ENCODE measurements at regions of chr10 and their contacts with region 1.

Region 1: DNA sequence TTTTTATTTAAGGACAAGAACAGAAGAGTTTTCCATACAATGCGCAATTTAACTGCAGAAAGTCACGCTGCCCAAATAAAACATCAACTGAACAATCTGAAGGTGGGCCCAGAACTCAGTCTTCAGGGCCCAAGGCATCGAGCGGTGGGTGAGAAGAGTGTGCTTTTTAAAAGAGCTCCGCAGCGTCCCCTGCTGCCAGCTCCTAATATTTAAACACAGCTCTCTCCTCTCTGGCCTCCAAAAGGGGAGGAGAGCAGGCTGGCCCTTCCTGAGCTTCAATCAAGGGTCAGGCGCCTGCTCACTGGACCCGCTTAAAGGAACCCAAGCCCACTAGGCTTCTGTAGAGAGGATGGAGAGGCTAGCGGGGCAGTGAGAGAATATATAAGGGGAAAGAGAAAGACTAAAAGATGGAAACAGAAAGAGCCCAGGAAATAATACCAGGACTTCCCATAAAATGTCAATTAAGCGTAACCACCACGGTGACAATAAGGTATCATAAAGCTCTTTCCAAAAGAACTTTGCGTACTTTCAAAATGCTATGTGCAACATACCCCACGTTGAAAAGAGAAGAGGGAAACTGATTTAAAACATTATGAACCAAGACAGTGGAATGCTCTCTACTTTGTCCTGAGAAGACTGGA is 2.8 kb downstream of the FAM53B start:
- DNase-seq: peak; percentile 64 to 88 (median 80)
- ATAC-seq: peak; percentile 55
- H3K4me3 ChIP-seq: peak overlapping the region; percentile 10 to 75
- H3K4me3 Mint-ChIP-seq: peak overlapping the region; percentile 97
- H3K27ac ChIP-seq: peak overlapping the region in 1 of 2 experiments; percentile 73
- H3K27ac Mint-ChIP-seq: peak overlapping the region; percentile 93
- H3K4me1 ChIP-seq: peaks cover 67% of the 10 kb centered on the region
- H3K4me1 Mint-ChIP-seq: peaks cover 75% of the 10 kb centered on the region
- H3K27me3 ChIP-seq: no peaks in the 10 kb centered on the region
- H3K27me3 Mint-ChIP-seq: no peaks in the 10 kb centered on the region
- CTCF ChIP-seq: peak; percentile 94

Region 2: DNA sequence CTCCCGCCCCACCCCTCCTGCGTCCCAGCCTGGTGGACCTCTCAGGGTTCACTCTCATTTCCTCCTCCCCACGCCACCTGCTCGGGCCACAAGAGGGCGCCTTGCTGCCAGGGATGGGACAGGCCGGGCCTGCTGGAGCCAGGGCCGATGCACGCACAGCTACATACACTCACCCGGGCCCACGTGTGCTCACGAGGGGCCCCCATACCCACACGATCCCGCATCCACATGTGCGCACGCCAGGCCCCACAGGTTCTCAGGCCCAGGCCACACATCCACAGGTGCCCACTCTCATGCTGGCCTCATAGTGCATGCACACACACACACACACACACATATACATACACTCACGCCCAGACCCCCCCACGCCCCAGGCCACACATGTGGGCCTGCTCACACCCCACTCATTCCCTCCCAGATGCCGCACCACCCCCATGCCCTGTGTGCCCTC is 211.2 kb before region 1 on chr10:
- CTCF ChIA-PET with region 1: interaction called, 140 read pairs
- POLR2A ChIA-PET with region 1: interaction called, 4 read pairs
- intact Hi-C with region 1: loop called (anchors 1 kb)
- DNase-seq: peak; percentile 76 to 92 (median 85)
- ATAC-seq: peak; percentile 97
- H3K4me3 ChIP-seq: no peak overlapping the region
- H3K4me3 Mint-ChIP-seq: peak overlapping the region; percentile 40
- H3K27ac ChIP-seq: no peak overlapping the region
- H3K27ac Mint-ChIP-seq: no peak overlapping the region
- H3K4me1 ChIP-seq: no peaks in the 10 kb centered on the region
- H3K4me1 Mint-ChIP-seq: peaks cover 14% of the 10 kb centered on the region
- H3K27me3 ChIP-seq: no peaks in the 10 kb centered on the region
- H3K27me3 Mint-ChIP-seq: no peaks in the 10 kb centered on the region
- CTCF ChIP-seq: peak; percentile 66

Region 3: GRCh38 chr10:124626759-124627380 is 114.5 kb before region 1 on chr10:
- CTCF ChIA-PET with region 1: interaction called, 73 read pairs
- POLR2A ChIA-PET with region 1: interaction called, 10 read pairs
- intact Hi-C with region 1: loop called (anchors 1 kb)
- DNase-seq: peak in 7 of 9 experiments; percentile 49 to 78 (median 62)
- ATAC-seq: peak; percentile 80
- H3K4me3 ChIP-seq: no peak overlapping the region
- H3K4me3 Mint-ChIP-seq: peak overlapping the region; percentile 45
- H3K27ac ChIP-seq: peak overlapping the region in 1 of 2 experiments; percentile 48
- H3K27ac Mint-ChIP-seq: peak overlapping the region; percentile 81
- H3K4me1 ChIP-seq: peaks cover 40% of the 10 kb centered on the region
- H3K4me1 Mint-ChIP-seq: peaks cover 52% of the 10 kb centered on the region
- H3K27me3 ChIP-seq: no peaks in the 10 kb centered on the region
- H3K27me3 Mint-ChIP-seq: no peaks in the 10 kb centered on the region
- CTCF ChIP-seq: no peak

Region 4: DNA sequence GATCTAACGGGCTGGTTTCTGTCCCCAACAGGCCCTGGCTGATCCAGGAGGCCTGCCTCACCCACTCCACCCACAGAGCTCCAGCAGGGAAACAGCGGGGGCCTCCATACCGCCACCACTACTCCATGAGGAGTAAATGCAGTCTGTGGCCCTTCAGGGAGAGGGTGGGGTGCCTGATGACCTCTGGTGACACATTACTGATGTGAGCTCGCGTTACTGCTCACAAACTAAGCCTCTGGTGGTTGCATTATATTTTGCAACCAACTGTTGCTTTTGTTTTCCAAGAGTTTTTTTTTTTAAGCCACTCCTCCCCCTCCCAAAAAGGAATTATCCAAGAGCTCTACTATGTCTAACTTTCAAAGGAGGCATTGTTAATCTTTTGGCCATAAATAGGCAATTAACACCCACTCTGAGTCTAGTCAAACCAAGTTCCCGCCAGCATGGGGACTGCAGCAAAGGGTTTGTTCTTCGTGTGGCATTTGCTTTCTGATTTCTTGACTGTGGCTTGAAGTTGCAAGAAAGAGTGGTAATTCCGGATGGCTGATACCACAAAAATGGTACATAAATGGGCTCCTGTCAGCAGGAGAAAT is 69.8 kb before region 1 on chr10:
- CTCF ChIA-PET with region 1: interaction called, 42 read pairs
- POLR2A ChIA-PET with region 1: interaction called, 4 read pairs
- intact Hi-C with region 1: no loop called
- DNase-seq: peak in 2 of 9 experiments; percentile 44 to 70
- ATAC-seq: peak; percentile 44
- H3K4me3 ChIP-seq: peak overlapping the region; percentile 1 to 2
- H3K4me3 Mint-ChIP-seq: peak overlapping the region; percentile 60
- H3K27ac ChIP-seq: peak overlapping the region; percentile 9 to 69
- H3K27ac Mint-ChIP-seq: peak overlapping the region; percentile 84
- H3K4me1 ChIP-seq: peaks cover 83% of the 10 kb centered on the region
- H3K4me1 Mint-ChIP-seq: peaks cover 77% of the 10 kb centered on the region
- H3K27me3 ChIP-seq: no peaks in the 10 kb centered on the region
- H3K27me3 Mint-ChIP-seq: no peaks in the 10 kb centered on the region
- CTCF ChIP-seq: no peak

Region 5: GRCh38 chr10:124708922-124709520 is 32.4 kb before region 1 on chr10:
- CTCF ChIA-PET with region 1: interaction called, 29 read pairs
- POLR2A ChIA-PET with region 1: interaction called, 5 read pairs
- intact Hi-C with region 1: loop called (anchors 1 to 5 kb)
- DNase-seq: peak in 1 of 9 experiments; percentile 52
- ATAC-seq: peak; percentile 16
- H3K4me3 ChIP-seq: no peak overlapping the region
- H3K4me3 Mint-ChIP-seq: no peak overlapping the region
- H3K27ac ChIP-seq: peak overlapping the region in 1 of 2 experiments; percentile 72
- H3K27ac Mint-ChIP-seq: peak overlapping the region; percentile 83
- H3K4me1 ChIP-seq: peaks cover 47% of the 10 kb centered on the region
- H3K4me1 Mint-ChIP-seq: peaks cover 85% of the 10 kb centered on the region
- H3K27me3 ChIP-seq: no peaks in the 10 kb centered on the region
- H3K27me3 Mint-ChIP-seq: no peaks in the 10 kb centered on the region
- CTCF ChIP-seq: no peak

Region 6: GRCh38 chr10:124916585-124917427 is 175.4 kb after region 1 on chr10:
- CTCF ChIA-PET with region 1: no interaction called
- POLR2A ChIA-PET with region 1: no interaction called
- intact Hi-C with region 1: loop called (anchors 2 to 5 kb)
- DNase-seq: peak; percentile 92 to 98 (median 97)
- ATAC-seq: peak; percentile 87
- H3K4me3 ChIP-seq: peak overlapping the region; percentile 82 to 92
- H3K4me3 Mint-ChIP-seq: peak overlapping the region; percentile 88
- H3K27ac ChIP-seq: peak overlapping the region; percentile 95 to 99
- H3K27ac Mint-ChIP-seq: peak overlapping the region; percentile 96
- H3K4me1 ChIP-seq: peaks cover 26% of the 10 kb centered on the region
- H3K4me1 Mint-ChIP-seq: peaks cover 40% of the 10 kb centered on the region
- H3K27me3 ChIP-seq: no peaks in the 10 kb centered on the region
- H3K27me3 Mint-ChIP-seq: peaks cover 2% of the 10 kb centered on the region
- CTCF ChIP-seq: no peak

Measured in CD8-positive, alpha-beta T cell (primary cell).